ENCODE measurements at regions of chr7 and their contacts with region 1.

Region 1: DNA sequence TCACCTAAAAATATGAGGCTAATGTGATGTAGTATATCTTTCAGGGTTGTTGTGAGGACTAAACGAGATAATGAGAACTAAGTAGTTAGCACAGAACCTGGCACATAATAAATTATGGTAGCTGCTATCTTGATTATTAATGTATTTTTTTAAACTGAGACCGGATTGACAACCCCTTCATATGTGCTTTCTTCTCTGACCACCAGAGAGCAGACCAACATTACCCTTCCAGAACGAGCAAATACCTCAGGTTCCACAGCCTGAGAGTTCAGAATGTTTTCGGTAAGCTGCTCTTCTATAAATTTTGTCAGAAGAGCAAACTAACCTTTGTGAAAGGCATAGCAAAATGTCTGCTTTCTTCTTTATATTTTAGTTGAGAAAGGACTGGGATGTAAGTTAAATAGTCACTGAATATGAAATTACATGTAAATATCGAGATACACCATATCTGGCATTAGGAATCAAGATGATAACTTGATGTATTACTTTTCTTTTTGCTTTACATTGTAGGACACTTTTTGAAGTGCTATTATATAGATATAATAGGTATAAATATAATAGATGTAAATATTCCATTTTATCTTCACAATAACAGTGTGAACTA is 13.6 kb upstream of the BPGM start:
- DNase-seq: peak in 6 of 9 experiments; percentile 26 to 81 (median 46)
- ATAC-seq: peak; percentile 96
- H3K4me3 ChIP-seq: no peak overlapping the region
- H3K4me3 Mint-ChIP-seq: no peak overlapping the region
- H3K27ac ChIP-seq: no peak overlapping the region
- H3K27ac Mint-ChIP-seq: no peak overlapping the region
- H3K4me1 ChIP-seq: peaks cover 6% of the 10 kb centered on the region
- H3K4me1 Mint-ChIP-seq: peaks cover 18% of the 10 kb centered on the region
- H3K27me3 ChIP-seq: peaks cover 0 to 3% of the 10 kb centered on the region in 2 experiments
- H3K27me3 Mint-ChIP-seq: peaks cover 12% of the 10 kb centered on the region
- CTCF ChIP-seq: peak; percentile 72

Region 2: GRCh38 chr7:134669845-134670373 is 36.9 kb after region 1 on chr7:
- CTCF ChIA-PET with region 1: interaction called, 12 read pairs
- POLR2A ChIA-PET with region 1: no interaction called
- intact Hi-C with region 1: loop called in 1 of 2 experiments (anchors 5 kb)
- DNase-seq: peak; percentile 63 to 94 (median 89)
- ATAC-seq: peak; percentile 94
- H3K4me3 ChIP-seq: peak overlapping the region in 1 of 2 experiments; percentile 4
- H3K4me3 Mint-ChIP-seq: peak overlapping the region; percentile 68
- H3K27ac ChIP-seq: peak overlapping the region; percentile 65 to 82
- H3K27ac Mint-ChIP-seq: peak overlapping the region; percentile 95
- H3K4me1 ChIP-seq: peaks cover 34% of the 10 kb centered on the region
- H3K4me1 Mint-ChIP-seq: peaks cover 46% of the 10 kb centered on the region
- H3K27me3 ChIP-seq: no peaks in the 10 kb centered on the region
- H3K27me3 Mint-ChIP-seq: no peaks in the 10 kb centered on the region
- CTCF ChIP-seq: no peak

Region 3: DNA sequence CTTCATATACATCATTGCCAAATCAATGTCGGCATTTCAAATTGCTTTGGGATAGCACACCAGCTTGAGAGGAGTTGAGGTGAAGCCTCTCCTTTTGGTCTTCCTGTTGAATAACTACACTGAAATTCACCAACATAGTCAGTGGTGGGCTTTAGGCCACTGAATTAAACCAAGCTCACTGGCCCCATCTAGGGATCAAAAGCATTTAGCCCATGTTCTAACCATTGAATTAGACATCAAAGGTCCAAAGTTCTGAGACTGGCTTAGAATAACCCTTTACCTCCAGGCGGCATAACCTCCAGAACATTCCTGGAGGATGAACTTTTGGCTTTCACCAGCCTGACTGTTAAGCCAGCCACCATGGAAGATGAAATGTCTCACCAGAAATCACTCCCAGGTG is 68.2 kb after region 1 on chr7:
- CTCF ChIA-PET with region 1: interaction called, 175 read pairs
- POLR2A ChIA-PET with region 1: interaction called, 8 read pairs
- intact Hi-C with region 1: loop called (anchors 1 kb)
- DNase-seq: peak in 7 of 9 experiments; percentile 4 to 67 (median 38)
- ATAC-seq: peak; percentile 62
- H3K4me3 ChIP-seq: no peak overlapping the region
- H3K4me3 Mint-ChIP-seq: no peak overlapping the region
- H3K27ac ChIP-seq: no peak overlapping the region
- H3K27ac Mint-ChIP-seq: no peak overlapping the region
- H3K4me1 ChIP-seq: no peaks in the 10 kb centered on the region
- H3K4me1 Mint-ChIP-seq: no peaks in the 10 kb centered on the region
- H3K27me3 ChIP-seq: no peaks in the 10 kb centered on the region
- H3K27me3 Mint-ChIP-seq: no peaks in the 10 kb centered on the region
- CTCF ChIP-seq: peak; percentile 32

Region 4: DNA sequence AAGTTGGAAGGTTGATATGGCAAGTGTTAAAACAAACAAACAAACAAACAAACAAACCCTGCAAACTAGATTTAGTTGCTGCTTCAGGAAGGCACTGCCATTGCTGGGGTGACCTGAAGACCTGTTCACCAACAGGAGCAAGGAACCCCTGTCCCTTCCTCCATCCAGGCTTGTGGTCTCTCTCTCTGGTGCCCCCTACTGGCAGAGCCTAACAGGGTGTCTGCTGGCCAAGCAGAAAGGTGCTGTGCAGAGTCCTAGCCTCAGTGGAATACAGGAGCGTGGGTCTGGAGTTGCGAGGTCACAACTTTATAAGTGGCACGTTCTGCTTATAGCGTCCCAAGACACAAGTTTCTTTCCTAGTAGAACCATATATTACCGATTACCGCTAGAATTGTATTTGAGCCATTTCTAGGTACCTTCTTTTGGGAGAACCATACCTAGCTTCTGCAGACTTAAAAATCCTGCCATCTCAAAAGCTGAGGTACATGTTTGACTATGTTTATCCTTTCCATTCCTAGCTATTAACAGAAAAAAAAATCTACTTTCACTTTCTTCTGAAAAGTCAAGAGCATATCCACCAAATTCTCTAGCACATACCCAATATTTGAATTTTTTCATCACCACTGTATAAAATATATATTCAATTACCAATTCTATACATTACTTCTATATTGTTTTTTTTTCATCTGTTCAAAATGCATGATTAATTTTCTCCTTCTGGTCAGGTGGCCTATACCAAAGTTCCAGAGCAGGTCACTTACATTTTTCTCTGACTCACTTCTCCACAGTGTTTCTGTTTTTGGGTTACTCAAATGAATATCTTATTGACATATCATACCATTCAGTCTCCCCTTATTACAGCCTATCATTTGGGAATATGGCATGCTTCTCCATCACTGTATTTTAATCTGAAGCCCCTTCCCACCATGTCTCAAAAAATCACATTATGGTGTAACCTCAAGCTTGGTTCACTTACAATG is 117.3 kb after region 1 on chr7:
- CTCF ChIA-PET with region 1: interaction called, 63 read pairs
- POLR2A ChIA-PET with region 1: no interaction called
- intact Hi-C with region 1: loop called (anchors 1 kb)
- DNase-seq: peak; percentile 24 to 77 (median 68)
- ATAC-seq: peak; percentile 64
- H3K4me3 ChIP-seq: no peak overlapping the region
- H3K4me3 Mint-ChIP-seq: no peak overlapping the region
- H3K27ac ChIP-seq: no peak overlapping the region
- H3K27ac Mint-ChIP-seq: no peak overlapping the region
- H3K4me1 ChIP-seq: no peaks in the 10 kb centered on the region
- H3K4me1 Mint-ChIP-seq: no peaks in the 10 kb centered on the region
- H3K27me3 ChIP-seq: no peaks in the 10 kb centered on the region
- H3K27me3 Mint-ChIP-seq: peaks cover 4% of the 10 kb centered on the region
- CTCF ChIP-seq: peak; percentile 63

Region 5: DNA sequence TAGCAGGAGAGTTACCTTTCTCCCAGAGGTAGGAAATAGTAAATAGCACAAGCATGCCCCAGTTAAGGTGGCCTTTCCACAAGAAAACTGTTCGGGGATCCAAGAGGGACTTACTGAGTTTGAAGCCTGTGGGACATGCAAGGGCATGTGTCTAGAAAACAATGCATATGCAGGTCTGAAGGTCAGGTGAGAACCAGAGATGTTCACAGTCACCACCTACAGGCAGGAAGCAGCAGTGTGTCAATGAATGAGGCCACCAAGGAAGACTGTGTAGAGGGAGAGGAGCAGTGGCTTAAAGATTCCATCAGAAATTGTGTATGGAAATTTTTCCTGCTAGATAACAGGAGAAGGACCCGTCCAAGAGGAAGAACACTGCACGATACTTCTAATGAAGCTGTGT is 212.4 kb after region 1 on chr7:
- CTCF ChIA-PET with region 1: interaction called, 4 read pairs
- POLR2A ChIA-PET with region 1: no interaction called
- intact Hi-C with region 1: loop called in 1 of 2 experiments (anchors 10 kb)
- DNase-seq: peak in 2 of 9 experiments; percentile 4 to 14
- ATAC-seq: no peak
- H3K4me3 ChIP-seq: no peak overlapping the region
- H3K4me3 Mint-ChIP-seq: no peak overlapping the region
- H3K27ac ChIP-seq: no peak overlapping the region
- H3K27ac Mint-ChIP-seq: no peak overlapping the region
- H3K4me1 ChIP-seq: no peaks in the 10 kb centered on the region
- H3K4me1 Mint-ChIP-seq: no peaks in the 10 kb centered on the region
- H3K27me3 ChIP-seq: no peaks in the 10 kb centered on the region
- H3K27me3 Mint-ChIP-seq: no peaks in the 10 kb centered on the region
- CTCF ChIP-seq: no peak

Region 6: DNA sequence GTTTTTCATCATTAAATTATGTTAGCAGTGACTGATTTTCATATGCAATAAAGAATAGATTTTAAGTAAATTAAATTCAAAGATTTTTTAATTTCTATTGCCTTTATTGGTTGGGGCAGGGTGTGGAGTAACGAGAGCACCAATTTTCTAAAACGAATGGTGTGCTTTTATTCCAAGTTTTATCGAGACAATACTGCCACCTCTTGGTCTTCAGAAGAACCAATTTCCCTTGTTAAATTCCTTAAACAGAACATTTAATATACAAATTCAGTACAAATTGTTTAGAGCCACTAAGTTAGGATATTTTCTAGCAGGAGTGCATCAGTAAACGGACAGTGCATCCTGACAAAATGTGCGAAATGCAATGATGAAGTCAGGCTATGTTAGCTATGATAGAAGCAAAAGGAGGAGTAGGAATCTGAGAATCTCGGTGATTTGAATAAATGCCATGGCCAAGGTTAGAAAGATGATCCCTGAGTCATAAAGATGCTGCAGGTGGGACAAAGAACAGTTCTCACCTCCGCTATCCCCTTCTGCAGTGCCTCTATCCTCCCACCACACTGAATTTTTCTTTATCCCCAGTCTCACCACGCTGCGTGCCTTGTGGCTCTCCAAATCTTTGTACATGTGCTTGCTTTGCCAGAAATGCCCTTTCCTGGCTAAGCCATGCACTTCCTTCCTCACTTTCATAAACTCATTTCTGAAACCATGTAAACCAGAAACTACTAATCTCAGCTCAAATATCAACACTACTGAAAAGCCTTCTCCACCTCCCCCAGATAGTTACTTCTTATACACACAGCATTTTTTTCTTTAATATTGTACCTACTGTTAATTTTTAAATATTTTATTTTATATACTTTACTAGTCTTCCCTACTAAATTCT is 321.4 kb after region 1 on chr7:
- CTCF ChIA-PET with region 1: interaction called, 40 read pairs
- POLR2A ChIA-PET with region 1: interaction called, 4 read pairs
- intact Hi-C with region 1: loop called (anchors 1 kb)
- DNase-seq: peak in 2 of 9 experiments; percentile 43 to 64
- ATAC-seq: no peak
- H3K4me3 ChIP-seq: no peak overlapping the region
- H3K4me3 Mint-ChIP-seq: no peak overlapping the region
- H3K27ac ChIP-seq: no peak overlapping the region
- H3K27ac Mint-ChIP-seq: no peak overlapping the region
- H3K4me1 ChIP-seq: no peaks in the 10 kb centered on the region
- H3K4me1 Mint-ChIP-seq: no peaks in the 10 kb centered on the region
- H3K27me3 ChIP-seq: no peaks in the 10 kb centered on the region
- H3K27me3 Mint-ChIP-seq: peaks cover 2% of the 10 kb centered on the region
- CTCF ChIP-seq: peak; percentile 74